Kidney (tissue), 22 donors: ENCODE measurements at regions of chr6 and their contacts with region 1.

Region 1: GRCh38 chr6:71190809-71191208 is 97.8 kb upstream of the OGFRL1 start:
- DNase-seq: peak in 2 of 5 donors; percentile 41 to 57
- H3K4me3 ChIP-seq: no peak overlapping the region
- H3K27ac ChIP-seq: no peak overlapping the region
- H3K4me1 ChIP-seq: no peaks in the 10 kb centered on the region
- H3K27me3 ChIP-seq: no peaks in the 10 kb centered on the region
- CTCF ChIP-seq: peak; percentile 15

Region 2: DNA sequence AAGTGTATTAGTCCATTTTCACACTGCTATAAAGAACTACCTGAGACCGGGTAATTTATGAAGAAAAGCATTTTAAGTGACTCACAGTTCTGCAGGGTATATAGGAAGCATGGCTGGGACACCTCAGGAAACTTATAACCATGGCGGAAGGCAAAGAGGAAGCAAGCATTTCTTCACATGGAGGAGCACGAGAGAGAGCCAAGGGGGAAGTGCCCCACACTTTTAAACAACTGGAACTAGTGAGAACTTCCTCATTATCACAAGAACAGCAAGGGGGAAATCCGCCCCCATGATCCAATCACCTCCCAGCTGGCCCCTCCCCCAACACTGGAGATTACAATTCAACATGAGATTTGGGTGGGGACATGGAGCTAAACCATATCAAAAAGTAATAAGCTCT is 205.7 kb before region 1 on chr6:
- intact Hi-C with region 1: no loop called
- DNase-seq: no peak
- H3K4me3 ChIP-seq: no peak overlapping the region
- H3K27ac ChIP-seq: no peak overlapping the region
- H3K4me1 ChIP-seq: no peaks in the 10 kb centered on the region
- H3K27me3 ChIP-seq: no peaks in the 10 kb centered on the region
- CTCF ChIP-seq: no peak

Region 3: GRCh38 chr6:71349395-71349794 is 158.6 kb after region 1 on chr6:
- intact Hi-C with region 1: loop called (anchors 10 kb)
- DNase-seq: peak in 1 of 5 donors; percentile 44
- H3K4me3 ChIP-seq: no peak overlapping the region
- H3K27ac ChIP-seq: no peak overlapping the region
- H3K4me1 ChIP-seq: peaks cover 0 to 5% (median 0%) of the 10 kb centered on the region in 3 donors
- H3K27me3 ChIP-seq: no peaks in the 10 kb centered on the region
- CTCF ChIP-seq: peak; percentile 39